ENCODE measurements at regions of chr3 and their contacts with region 1.

Region 1: GRCh38 chr3:129399145-129399894 is 29.1 kb downstream of the EFCAB12 start:
- DNase-seq: peak; percentile 40 to 96 (median 73)
- ATAC-seq: peak; percentile 83
- H3K4me3 ChIP-seq: peak overlapping the region; percentile 63 to 72
- H3K4me3 Mint-ChIP-seq: peak overlapping the region; percentile 98
- H3K27ac ChIP-seq: peak overlapping the region; percentile 73 to 88
- H3K27ac Mint-ChIP-seq: peak overlapping the region; percentile 99
- H3K4me1 ChIP-seq: peaks cover 12% of the 10 kb centered on the region
- H3K4me1 Mint-ChIP-seq: peaks cover 42% of the 10 kb centered on the region
- H3K27me3 ChIP-seq: no peaks in the 10 kb centered on the region
- H3K27me3 Mint-ChIP-seq: no peaks in the 10 kb centered on the region
- CTCF ChIP-seq: peak; percentile 78

Region 2: GRCh38 chr3:129428376-129429079 is 29.2 kb after region 1 on chr3 and contains the start of gene EFCAB12:
- CTCF ChIA-PET with region 1: interaction called, 3 read pairs
- POLR2A ChIA-PET with region 1: interaction called, 4 read pairs
- intact Hi-C with region 1: loop called (anchors 1 to 2 kb)
- DNase-seq: peak; percentile 76 to 93 (median 90)
- ATAC-seq: peak; percentile 94
- H3K4me3 ChIP-seq: peak within 1 kb of the TSS; percentile 45 to 58
- H3K4me3 Mint-ChIP-seq: peak within 1 kb of the TSS; percentile 85
- H3K27ac ChIP-seq: peak within 1 kb of the TSS; percentile 4 to 53
- H3K27ac Mint-ChIP-seq: peak within 1 kb of the TSS; percentile 84
- H3K4me1 ChIP-seq: peaks cover 12% of the 10 kb centered on the region
- H3K4me1 Mint-ChIP-seq: peaks cover 21% of the 10 kb centered on the region
- H3K27me3 ChIP-seq: no peaks in the 10 kb centered on the region
- H3K27me3 Mint-ChIP-seq: no peaks in the 10 kb centered on the region
- CTCF ChIP-seq: no peak
- total RNA-seq, gene EFCAB12: 2.3 to 3.1 TPM

Measured in CD8-positive, alpha-beta T cell (primary cell).